Naive thymus-derived CD4-positive, alpha-beta T cell (primary cell): ENCODE measurements at regions of chr5 and their contacts with region 1.

Region 1: DNA sequence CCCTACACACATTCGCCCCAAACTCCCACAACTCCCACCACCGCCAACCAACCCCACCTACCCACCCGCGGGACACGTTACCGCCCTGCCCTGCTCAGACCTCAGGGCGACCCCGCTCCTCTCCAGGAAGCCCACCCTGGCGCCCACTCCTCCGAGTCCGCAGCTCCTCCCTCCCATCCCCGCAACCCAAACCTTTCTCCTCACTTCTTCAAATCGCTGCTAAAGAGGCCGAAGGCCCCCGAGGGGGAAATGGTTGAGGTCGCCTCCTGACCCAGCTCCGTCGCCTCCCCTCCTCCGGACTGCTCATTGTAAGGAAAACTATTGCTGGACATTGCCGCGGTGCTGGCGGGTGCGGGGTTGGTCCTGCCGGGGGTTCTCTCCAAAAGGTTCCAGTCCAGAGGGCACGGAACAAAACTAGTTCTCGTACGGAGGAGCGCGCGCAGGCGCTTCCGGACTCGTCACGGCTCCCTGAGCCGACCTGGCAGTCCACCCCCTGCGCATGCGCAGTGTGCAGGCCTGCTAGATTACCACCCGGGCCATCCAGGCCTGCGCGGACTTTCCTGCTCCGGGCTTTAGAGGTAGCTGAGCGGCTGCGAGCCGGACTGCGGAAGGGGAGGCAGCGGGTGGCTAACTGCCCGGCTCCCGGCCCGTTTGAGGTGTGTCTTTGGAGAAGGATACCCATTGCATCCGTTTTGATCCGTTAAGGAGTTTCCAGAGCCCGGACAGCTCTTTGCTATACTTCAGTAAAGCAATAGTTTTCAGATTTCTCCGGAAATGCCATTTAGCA is at the start of gene AP3B1:
- DNase-seq: peak; percentile 94 to 98 (median 96)
- ATAC-seq: peak; percentile 97
- H3K4me3 ChIP-seq: peak within 1 kb of the TSS; percentile 98
- H3K4me3 Mint-ChIP-seq: peak within 1 kb of the TSS; percentile 86 to 100 (median 98)
- H3K27ac ChIP-seq: peak within 1 kb of the TSS; percentile 88
- H3K27ac Mint-ChIP-seq: peak within 1 kb of the TSS; percentile 77 to 99 (median 97)
- H3K4me1 ChIP-seq: peaks cover 5 to 9% of the 10 kb centered on the region in 2 donors
- H3K4me1 Mint-ChIP-seq: peaks cover 27 to 50% (median 46%) of the 10 kb centered on the region in 7 donors
- H3K27me3 ChIP-seq: no peaks in the 10 kb centered on the region
- H3K27me3 Mint-ChIP-seq: peaks cover 0 to 11% (median 0%) of the 10 kb centered on the region in 5 donors
- total RNA-seq, gene AP3B1: 30.2 to 45.0 (median 37.2) TPM

Region 2: GRCh38 chr5:77906806-77907205 is 387.6 kb before region 1 on chr5:
- CTCF ChIA-PET with region 1: no interaction called
- POLR2A ChIA-PET with region 1: no interaction called
- intact Hi-C with region 1: no loop called
- DNase-seq: no peak
- ATAC-seq: no peak
- H3K4me3 ChIP-seq: no peak overlapping the region
- H3K4me3 Mint-ChIP-seq: no peak overlapping the region
- H3K27ac ChIP-seq: no peak overlapping the region
- H3K27ac Mint-ChIP-seq: no peak overlapping the region
- H3K4me1 ChIP-seq: no peaks in the 10 kb centered on the region
- H3K4me1 Mint-ChIP-seq: no peaks in the 10 kb centered on the region
- H3K27me3 ChIP-seq: no peaks in the 10 kb centered on the region
- H3K27me3 Mint-ChIP-seq: peaks cover 7 to 21% (median 11%) of the 10 kb centered on the region in 5 donors

Region 3: DNA sequence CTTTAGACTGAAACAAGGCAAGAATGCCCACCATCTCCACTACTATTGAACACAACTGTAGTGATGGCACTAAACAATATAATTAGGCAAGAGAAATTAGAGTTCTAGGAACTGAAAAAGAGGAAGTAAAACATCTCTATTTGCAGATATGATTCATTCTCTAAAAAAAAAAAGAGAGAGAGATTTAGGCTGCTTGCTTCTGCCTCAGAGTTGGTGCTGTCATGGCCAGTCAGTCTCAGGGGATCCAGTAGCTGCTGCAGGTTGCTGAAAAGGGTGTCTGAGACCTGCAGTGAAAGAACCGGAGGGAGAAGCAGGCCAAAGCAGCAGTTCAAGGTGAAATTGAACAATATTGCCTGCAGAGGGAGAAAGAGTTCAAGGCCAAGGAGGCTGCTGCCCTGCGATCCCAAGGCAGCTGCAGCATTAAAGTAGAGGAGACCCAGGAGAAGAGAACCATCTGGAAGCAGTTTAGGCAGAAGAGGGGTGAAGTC is 72.4 kb before region 1 on chr5:
- CTCF ChIA-PET with region 1: no interaction called
- POLR2A ChIA-PET with region 1: no interaction called
- intact Hi-C with region 1: no loop called
- DNase-seq: no peak
- ATAC-seq: peak; percentile 73
- H3K4me3 ChIP-seq: no peak overlapping the region
- H3K4me3 Mint-ChIP-seq: no peak overlapping the region
- H3K27ac ChIP-seq: no peak overlapping the region
- H3K27ac Mint-ChIP-seq: no peak overlapping the region
- H3K4me1 ChIP-seq: no peaks in the 10 kb centered on the region
- H3K4me1 Mint-ChIP-seq: peaks cover 0 to 11% (median 0%) of the 10 kb centered on the region in 7 donors
- H3K27me3 ChIP-seq: no peaks in the 10 kb centered on the region
- H3K27me3 Mint-ChIP-seq: no peaks in the 10 kb centered on the region

Region 4: DNA sequence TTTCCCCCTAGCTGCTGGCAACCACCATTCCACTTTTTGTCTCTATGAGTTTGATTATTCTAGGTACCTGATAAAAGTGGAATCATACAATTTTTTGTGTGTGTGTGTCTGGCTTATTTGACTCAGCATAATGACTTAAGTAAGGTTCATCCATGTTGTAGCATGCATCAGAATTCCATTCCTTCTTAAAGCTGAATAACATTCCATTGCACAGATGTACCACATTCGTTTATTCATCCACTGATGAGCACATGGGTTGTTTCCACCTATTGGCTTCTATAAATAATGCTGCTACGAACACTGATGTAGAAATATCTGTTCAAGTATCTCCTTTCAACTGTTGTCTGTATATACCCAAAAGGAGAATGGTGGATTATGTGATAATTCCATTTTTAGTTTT is 33.7 kb before region 1 on chr5:
- CTCF ChIA-PET with region 1: no interaction called
- POLR2A ChIA-PET with region 1: no interaction called
- intact Hi-C with region 1: no loop called
- DNase-seq: no peak
- ATAC-seq: no peak
- H3K4me3 ChIP-seq: no peak overlapping the region
- H3K4me3 Mint-ChIP-seq: no peak overlapping the region
- H3K27ac ChIP-seq: no peak overlapping the region
- H3K27ac Mint-ChIP-seq: no peak overlapping the region
- H3K4me1 ChIP-seq: no peaks in the 10 kb centered on the region
- H3K4me1 Mint-ChIP-seq: peaks cover 10 to 37% (median 31%) of the 10 kb centered on the region in 7 donors
- H3K27me3 ChIP-seq: no peaks in the 10 kb centered on the region
- H3K27me3 Mint-ChIP-seq: no peaks in the 10 kb centered on the region

Region 5: GRCh38 chr5:78283802-78284201 is 10.6 kb before region 1 on chr5:
- CTCF ChIA-PET with region 1: no interaction called
- POLR2A ChIA-PET with region 1: interaction called, 12 read pairs
- intact Hi-C with region 1: no loop called
- DNase-seq: no peak
- ATAC-seq: no peak
- H3K4me3 ChIP-seq: no peak overlapping the region
- H3K4me3 Mint-ChIP-seq: peak overlapping the region in 1 of 10 donors; percentile 10
- H3K27ac ChIP-seq: no peak overlapping the region
- H3K27ac Mint-ChIP-seq: no peak overlapping the region
- H3K4me1 ChIP-seq: peaks cover 0 to 4% of the 10 kb centered on the region in 2 donors
- H3K4me1 Mint-ChIP-seq: peaks cover 16 to 65% (median 48%) of the 10 kb centered on the region in 7 donors
- H3K27me3 ChIP-seq: no peaks in the 10 kb centered on the region
- H3K27me3 Mint-ChIP-seq: no peaks in the 10 kb centered on the region

Region 6: DNA sequence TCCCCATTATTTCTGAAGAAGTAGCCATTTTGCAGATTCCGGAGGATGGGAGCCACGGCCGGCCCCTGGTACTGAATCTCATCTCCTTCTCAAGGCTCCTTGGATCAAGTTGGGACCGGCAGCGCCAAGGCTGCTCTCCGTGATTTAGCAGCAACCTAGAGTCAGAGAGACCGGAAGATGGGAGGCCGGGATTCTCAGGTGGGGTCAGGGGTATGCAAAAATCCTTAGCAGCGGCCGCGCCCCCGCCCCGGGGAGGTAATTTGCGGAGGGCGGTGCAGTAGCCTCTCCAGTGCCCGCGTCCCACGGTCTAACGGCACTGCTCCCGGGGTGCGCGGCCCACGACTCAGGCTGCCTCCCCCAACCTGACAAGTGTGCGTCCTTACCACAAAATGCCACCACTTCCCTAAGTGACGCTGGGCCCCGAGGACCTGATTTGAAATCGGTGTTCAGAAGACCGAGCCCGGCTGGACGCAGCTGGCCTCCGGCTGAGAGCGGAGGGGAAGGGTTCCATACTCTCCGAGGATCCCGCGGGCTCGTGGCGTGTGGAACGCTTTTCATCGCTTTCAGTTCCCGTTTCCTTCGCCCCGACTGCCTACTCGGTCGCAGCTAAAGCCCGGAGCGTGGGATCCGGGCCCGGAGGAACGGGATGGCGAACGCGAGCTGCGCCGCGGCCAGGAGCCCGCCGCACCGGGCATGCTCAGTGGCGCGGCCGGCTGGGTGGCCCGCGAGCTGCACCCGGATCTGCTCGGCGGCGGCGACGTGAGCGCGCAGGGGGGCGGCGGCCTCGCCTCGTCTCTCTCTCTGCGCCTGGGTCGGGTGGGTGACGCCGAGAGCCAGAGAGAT is 65.6 kb after region 1 on chr5 and contains the start of gene SCAMP1:
- CTCF ChIA-PET with region 1: interaction called, 27 read pairs
- POLR2A ChIA-PET with region 1: interaction called, 106 read pairs
- intact Hi-C with region 1: loop called (anchors 1 kb)
- DNase-seq: peak; percentile 84 to 96 (median 93)
- ATAC-seq: peak; percentile 92
- H3K4me3 ChIP-seq: peak within 1 kb of the TSS; percentile 99
- H3K4me3 Mint-ChIP-seq: peak within 1 kb of the TSS; percentile 89 to 97 (median 94)
- H3K27ac ChIP-seq: peak within 1 kb of the TSS; percentile 85
- H3K27ac Mint-ChIP-seq: peak within 1 kb of the TSS; percentile 71 to 97 (median 96)
- H3K4me1 ChIP-seq: peaks cover 11 to 16% of the 10 kb centered on the region in 2 donors
- H3K4me1 Mint-ChIP-seq: peaks cover 27 to 64% (median 55%) of the 10 kb centered on the region in 7 donors
- H3K27me3 ChIP-seq: no peaks in the 10 kb centered on the region
- H3K27me3 Mint-ChIP-seq: no peaks in the 10 kb centered on the region
- total RNA-seq, gene SCAMP1: 16.9 to 27.6 (median 23.0) TPM

Region 7: DNA sequence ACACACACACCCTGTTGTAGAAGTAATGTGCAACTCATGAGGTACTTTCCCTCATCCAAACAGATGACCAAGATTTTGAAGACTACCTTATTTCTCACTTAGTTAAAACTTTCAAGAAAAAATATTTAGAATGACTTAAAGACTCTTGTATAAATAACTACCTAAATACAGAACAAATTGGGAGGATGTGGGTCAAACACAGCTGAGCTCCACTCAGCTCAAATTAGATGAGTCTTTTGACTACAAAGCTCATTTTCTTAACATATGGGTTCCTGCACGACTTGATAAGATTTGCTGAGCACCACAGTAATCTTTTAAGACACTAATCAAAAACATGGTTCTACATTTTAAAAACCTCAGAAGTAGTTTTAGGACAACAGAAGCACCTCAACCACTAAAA is 1687.7 kb after region 1 on chr5:
- CTCF ChIA-PET with region 1: no interaction called
- POLR2A ChIA-PET with region 1: no interaction called
- intact Hi-C with region 1: loop called in 1 of 2 experiments (anchors 10 kb)
- DNase-seq: peak in 2 of 9 donors; percentile 3 to 6
- ATAC-seq: no peak
- H3K4me3 ChIP-seq: no peak overlapping the region
- H3K4me3 Mint-ChIP-seq: peak overlapping the region in 8 of 10 donors; percentile 19 to 58 (median 40)
- H3K27ac ChIP-seq: peak overlapping the region; percentile 22
- H3K27ac Mint-ChIP-seq: peak overlapping the region; percentile 25 to 91 (median 80)
- H3K4me1 ChIP-seq: peaks cover 3 to 16% of the 10 kb centered on the region in 2 donors
- H3K4me1 Mint-ChIP-seq: peaks cover 9 to 60% (median 50%) of the 10 kb centered on the region in 7 donors
- H3K27me3 ChIP-seq: no peaks in the 10 kb centered on the region
- H3K27me3 Mint-ChIP-seq: no peaks in the 10 kb centered on the region